Right ventricle myocardium inferior (tissue), 1 donor: ENCODE measurements at regions of chr1 and their contacts with region 1.

Region 1: GRCh38 chr1:70685300-70686241 is 274.5 kb downstream of the CTH start:
- DNase-seq: no peak
- ATAC-seq: peak; percentile 83

Region 2: GRCh38 chr1:70666381-70667140 is 19.0 kb before region 1 on chr1:
- intact Hi-C with region 1: no loop called
- DNase-seq: no peak
- ATAC-seq: no peak

Region 3: DNA sequence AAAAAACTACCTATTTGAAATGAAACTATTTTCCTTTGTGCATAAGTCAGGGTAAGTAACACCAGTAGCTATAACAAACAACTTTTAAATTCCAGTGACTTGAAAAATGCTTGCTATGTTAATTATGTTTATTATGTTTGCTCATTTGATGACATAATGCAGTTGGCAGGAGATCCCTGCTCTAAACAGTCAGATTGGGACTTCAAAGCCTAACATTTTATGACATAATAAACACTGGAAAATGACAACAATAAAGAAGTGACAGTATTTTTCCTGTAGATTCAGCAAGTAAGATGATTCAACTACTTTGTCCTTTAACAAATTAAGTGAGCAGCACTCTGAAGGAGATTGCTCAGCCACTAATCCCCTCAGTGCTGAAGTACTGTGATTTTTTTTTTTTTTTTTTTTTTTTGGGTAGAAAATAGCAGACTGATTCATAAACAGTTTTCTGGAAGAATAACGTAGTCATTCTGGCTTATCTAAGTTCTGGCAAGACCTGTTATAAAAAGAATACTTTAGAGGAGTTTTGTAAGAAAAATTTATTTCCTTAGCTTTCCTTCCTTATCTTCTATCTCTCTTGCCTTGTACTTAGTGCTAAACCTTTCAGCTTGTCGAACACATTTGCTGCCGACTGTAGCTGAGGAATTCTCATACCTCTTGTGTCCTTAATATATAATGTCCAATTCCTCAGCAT is 154.8 kb after region 1 on chr1:
- intact Hi-C with region 1: no loop called
- DNase-seq: no peak
- ATAC-seq: no peak

Region 4: DNA sequence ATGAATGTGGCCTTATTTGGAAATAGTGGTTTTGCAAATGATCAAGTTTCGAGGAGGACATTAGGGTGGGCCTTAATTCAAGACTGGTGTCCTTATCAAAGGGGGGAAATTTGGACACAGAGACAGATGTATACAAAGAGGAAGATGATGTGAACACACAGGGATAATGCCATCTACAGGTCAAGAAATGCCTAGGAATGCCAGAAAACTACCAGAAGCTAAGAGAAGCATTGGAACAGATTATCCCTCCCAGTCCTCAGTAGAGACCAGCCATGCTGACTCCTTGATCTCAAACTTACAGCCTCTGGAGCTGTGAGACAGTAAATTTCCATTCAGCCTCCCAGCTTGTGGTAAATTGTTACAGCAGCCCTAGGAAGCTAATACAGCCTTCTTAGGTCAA is 210.7 kb after region 1 on chr1:
- intact Hi-C with region 1: loop called (anchors 10 kb)
- DNase-seq: no peak
- ATAC-seq: no peak

Region 5: DNA sequence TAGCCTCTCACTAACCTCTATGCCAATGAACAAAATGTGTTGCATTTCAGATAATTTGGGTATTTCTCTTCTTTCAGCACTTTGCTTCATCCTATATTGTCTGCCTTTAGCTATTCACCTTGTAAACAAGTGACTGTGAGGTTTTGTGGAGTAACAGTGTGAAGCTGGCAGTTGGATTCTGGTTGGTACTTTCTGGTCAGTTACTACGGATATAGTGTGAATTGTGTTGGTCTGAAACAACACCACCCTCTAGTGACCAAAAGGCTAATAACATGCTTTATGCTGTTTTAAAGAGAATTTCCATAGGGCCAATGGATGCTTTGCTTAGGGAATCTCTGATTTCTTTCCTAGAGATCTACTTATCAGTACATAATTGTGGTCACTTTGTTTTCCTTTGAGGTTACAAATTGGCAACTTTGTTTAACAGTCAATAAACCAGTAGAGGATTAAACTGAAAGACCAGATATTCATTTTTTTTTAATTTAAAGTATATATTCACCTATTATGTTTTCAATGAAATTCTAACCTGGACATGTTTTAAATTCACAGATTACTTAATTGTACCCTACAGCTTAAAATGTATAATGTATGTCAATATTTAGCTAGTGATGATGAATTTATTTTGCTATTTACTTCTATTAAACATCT is 364.5 kb after region 1 on chr1:
- intact Hi-C with region 1: loop called (anchors 2 kb)
- DNase-seq: no peak
- ATAC-seq: peak; percentile 49

Region 6: DNA sequence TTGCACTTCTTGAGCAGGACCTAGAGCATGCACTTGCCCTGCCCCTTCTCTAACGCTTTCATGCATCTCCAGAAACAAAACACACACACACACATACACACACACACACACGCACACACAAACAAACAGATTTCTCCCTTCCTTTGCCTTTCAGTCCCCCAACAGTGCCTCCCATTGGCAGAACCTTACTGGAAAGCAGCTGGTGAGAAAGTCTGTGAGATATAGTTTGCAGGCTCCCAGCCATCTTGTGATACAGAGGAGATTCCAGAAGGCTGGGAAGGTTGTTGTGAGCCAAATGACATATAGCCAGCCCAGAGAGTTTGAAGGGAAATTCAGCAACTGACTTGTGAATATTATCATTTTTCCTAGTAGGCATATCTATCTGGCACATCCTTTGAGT is 431.2 kb after region 1 on chr1:
- intact Hi-C with region 1: no loop called
- DNase-seq: no peak
- ATAC-seq: no peak